Sciatic nerve (tissue), 2 donors: ENCODE measurements at regions of chr3 and their contacts with region 1.

Region 1: GRCh38 chr3:175082631-175083030 is 223.5 kb downstream of the NAALADL2 start:
- DNase-seq: no peak
- ATAC-seq: no peak

Region 2: GRCh38 chr3:176097027-176097426 is 1014.4 kb after region 1 on chr3:
- intact Hi-C with region 1: loop called (anchors 10 kb)
- DNase-seq: no peak
- ATAC-seq: no peak